ENCODE measurements at regions of chr5 and their contacts with region 1.

Region 1: GRCh38 chr5:54249210-54250028 is 61.0 kb downstream of the ARL15 start:
- DNase-seq: no peak
- H3K4me3 ChIP-seq: no peak overlapping the region
- H3K27ac ChIP-seq: no peak overlapping the region
- H3K4me1 ChIP-seq: no peaks in the 10 kb centered on the region
- H3K27me3 ChIP-seq: no peaks in the 10 kb centered on the region
- CTCF ChIP-seq: no peak
- POLR2A ChIP-seq: no peak

Region 2: DNA sequence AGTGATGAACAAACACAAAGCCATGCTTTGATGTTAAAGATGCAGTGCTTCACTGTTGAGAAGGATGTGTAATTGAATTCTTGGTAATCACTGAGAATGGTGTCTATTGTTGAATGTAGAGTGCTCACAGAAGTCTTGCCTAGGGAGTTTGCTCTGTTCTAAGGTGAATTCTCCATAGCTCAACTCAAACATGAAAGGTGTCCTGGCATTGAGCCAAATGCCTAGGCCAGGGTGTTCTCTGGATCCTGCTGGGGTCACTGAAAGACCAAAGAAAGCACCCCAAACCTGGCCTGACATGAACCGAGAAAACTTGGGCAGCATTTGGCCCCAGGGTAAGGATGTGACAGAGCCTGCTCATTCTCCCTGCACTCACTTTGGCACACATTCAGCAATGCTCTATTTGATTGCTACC is 156.3 kb before region 1 on chr5:
- intact Hi-C with region 1: no loop called
- DNase-seq: no peak
- H3K4me3 ChIP-seq: no peak overlapping the region
- H3K27ac ChIP-seq: no peak overlapping the region
- H3K4me1 ChIP-seq: no peaks in the 10 kb centered on the region
- H3K27me3 ChIP-seq: no peaks in the 10 kb centered on the region
- CTCF ChIP-seq: no peak
- POLR2A ChIP-seq: no peak

Region 3: GRCh38 chr5:54344653-54345052 is 95.2 kb after region 1 on chr5:
- intact Hi-C with region 1: no loop called
- DNase-seq: no peak
- H3K4me3 ChIP-seq: no peak overlapping the region
- H3K27ac ChIP-seq: no peak overlapping the region
- H3K4me1 ChIP-seq: no peaks in the 10 kb centered on the region
- H3K27me3 ChIP-seq: no peaks in the 10 kb centered on the region
- CTCF ChIP-seq: no peak
- POLR2A ChIP-seq: no peak

Region 4: GRCh38 chr5:54412913-54413312 is 163.5 kb after region 1 on chr5:
- intact Hi-C with region 1: loop called (anchors 5 kb)
- DNase-seq: no peak
- H3K4me3 ChIP-seq: no peak overlapping the region
- H3K27ac ChIP-seq: no peak overlapping the region
- H3K4me1 ChIP-seq: no peaks in the 10 kb centered on the region
- H3K27me3 ChIP-seq: no peaks in the 10 kb centered on the region
- CTCF ChIP-seq: no peak
- POLR2A ChIP-seq: no peak

Region 5: GRCh38 chr5:54460181-54460919 is 210.9 kb after region 1 on chr5:
- intact Hi-C with region 1: no loop called
- DNase-seq: no peak
- H3K4me3 ChIP-seq: no peak overlapping the region
- H3K27ac ChIP-seq: no peak overlapping the region
- H3K4me1 ChIP-seq: no peaks in the 10 kb centered on the region
- H3K27me3 ChIP-seq: no peaks in the 10 kb centered on the region
- CTCF ChIP-seq: no peak
- POLR2A ChIP-seq: no peak